ENCODE measurements at regions of chr5 and their contacts with region 1.

Region 1: GRCh38 chr5:148443998-148444397 is 60.2 kb downstream of the FBXO38 start:
- DNase-seq: peak in 3 of 6 donors; percentile 33 to 56 (median 35)
- ATAC-seq: peak; percentile 92 to 96 (median 96)
- H3K4me3 ChIP-seq: no peak overlapping the region
- H3K27ac ChIP-seq: no peak overlapping the region
- H3K4me1 ChIP-seq: no peaks in the 10 kb centered on the region
- H3K27me3 ChIP-seq: no peaks in the 10 kb centered on the region
- CTCF ChIP-seq: peak; percentile 39 to 76 (median 54)

Region 2: DNA sequence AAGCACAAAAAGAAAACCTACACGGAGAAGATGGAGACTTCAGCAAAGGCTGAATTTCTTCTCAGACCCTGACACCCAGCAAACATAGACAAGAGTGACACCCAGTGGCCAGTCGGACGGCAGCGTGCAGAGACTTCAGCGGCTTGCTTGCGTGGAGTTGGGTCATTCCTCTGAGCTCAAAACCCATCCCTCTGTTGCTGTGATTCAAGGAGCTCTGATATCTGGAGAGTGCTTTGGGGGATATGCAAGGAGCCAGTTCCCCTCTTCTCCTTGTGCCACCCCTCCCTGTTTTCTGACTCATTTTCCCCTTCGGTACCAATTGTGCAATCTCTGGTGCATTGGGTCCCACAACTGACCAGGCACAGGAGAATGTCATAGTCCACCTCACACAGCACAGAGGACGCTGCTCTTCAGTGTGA is 591.4 kb after region 1 on chr5:
- intact Hi-C with region 1: loop called in 1 of 3 experiments (anchors 5 kb)
- DNase-seq: peak; percentile 40 to 84 (median 67)
- ATAC-seq: peak; percentile 69 to 97 (median 94)
- H3K4me3 ChIP-seq: no peak overlapping the region
- H3K27ac ChIP-seq: no peak overlapping the region
- H3K4me1 ChIP-seq: peaks cover 0 to 3% (median 0%) of the 10 kb centered on the region in 3 donors
- H3K27me3 ChIP-seq: no peaks in the 10 kb centered on the region
- CTCF ChIP-seq: peak; percentile 50 to 86 (median 68)